B cell (primary cell): ENCODE measurements at regions of chr17 and their contacts with region 1.

Region 1: DNA sequence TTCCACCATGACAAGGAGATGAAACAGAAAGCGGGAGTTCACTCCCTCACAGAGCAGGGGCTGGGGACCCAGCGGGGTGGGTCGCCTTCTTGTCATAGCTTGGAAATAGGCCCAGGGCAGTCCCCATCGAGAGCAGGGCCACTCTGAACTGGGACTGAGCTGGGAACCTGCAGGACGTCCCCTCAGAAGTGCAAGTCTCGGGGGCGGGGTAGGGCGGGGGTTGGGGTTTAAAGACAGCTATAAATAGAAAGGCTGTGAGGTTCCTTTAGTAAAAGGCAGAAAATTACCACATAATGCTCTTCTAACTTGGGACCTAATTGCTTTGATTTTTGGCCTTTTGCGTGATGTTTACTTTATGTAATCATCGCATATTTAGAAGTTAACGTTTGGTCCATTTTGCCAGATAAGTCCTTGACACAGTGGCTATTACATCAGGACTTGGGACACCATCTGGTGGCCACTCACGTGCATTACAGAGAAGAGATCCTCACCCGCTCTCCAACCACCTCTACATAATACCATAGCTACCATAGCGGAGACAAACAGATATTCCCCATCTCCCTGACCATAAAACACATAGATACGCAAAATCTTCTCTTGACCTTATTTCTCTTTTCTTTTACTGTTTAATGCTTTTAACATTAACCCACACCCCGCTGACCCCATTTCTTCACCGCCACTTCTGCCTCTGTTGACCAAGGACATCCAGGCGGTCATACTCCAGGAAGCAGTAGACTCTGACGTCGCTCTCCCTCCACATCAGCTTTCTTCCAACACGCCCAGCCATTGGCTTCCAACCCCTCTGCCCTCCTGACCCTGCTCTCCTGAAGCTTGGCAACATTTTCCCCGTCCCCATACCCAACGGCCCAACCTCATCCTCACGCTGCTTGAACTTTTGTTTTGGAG is 27.5 kb upstream of the PIK3R6 start:
- DNase-seq: peak; percentile 71
- ATAC-seq: peak; percentile 51
- H3K4me3 ChIP-seq: no peak overlapping the region
- H3K4me3 Mint-ChIP-seq: no peak overlapping the region
- H3K27ac ChIP-seq: no peak overlapping the region
- H3K27ac Mint-ChIP-seq: no peak overlapping the region
- H3K4me1 ChIP-seq: peaks cover 23 to 38% of the 10 kb centered on the region in 2 donors
- H3K4me1 Mint-ChIP-seq: peaks cover 42% of the 10 kb centered on the region
- H3K27me3 ChIP-seq: no peaks in the 10 kb centered on the region
- H3K27me3 Mint-ChIP-seq: no peaks in the 10 kb centered on the region
- CTCF ChIP-seq: peak; percentile 80

Region 2: DNA sequence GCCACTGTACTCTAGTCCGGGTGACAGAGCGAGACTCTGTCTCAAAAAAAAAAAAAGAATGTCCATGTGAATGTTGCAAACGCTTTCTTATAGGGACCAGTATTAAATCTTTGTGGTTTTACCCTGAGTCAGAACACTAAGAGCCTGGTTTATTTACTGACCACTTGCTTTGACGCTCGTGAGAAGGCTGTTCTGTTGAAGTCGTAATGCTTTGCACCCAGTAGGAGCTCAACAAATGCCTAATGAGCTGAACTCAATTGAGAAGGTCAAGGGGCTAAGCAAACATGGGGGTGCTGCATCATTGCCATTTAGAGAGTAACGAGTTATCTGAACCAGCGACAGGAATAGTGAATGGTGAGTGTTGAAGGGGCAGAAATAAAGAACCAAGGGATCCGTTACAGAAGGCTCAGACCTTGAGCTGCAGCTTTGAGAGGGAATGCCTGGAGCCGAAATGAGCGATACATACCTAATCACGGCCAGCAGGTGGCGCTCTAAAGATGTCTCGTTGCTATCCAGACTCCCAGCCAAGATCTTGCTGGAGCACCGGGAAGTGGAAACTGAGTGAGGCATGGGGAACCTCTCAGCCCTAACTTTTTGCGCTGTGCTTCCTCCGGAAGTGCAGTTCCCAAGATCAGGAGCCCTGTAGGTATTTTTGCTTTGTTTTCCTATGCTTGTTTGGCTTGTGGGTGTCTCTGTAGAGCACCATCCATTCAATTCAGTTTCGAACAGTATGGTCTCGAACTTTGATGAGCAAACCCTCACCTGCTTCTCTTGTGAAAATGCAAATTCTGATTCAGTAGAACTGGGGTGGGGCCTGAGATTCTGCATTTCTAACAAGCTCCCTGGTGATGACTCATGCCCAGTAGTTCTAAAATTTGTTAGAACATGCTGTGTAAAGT is 484.7 kb before region 1 on chr17:
- CTCF ChIA-PET with region 1: interaction called, 12 read pairs
- POLR2A ChIA-PET with region 1: no interaction called
- intact Hi-C with region 1: loop called (anchors 1 kb)
- DNase-seq: peak; percentile 85
- ATAC-seq: peak; percentile 76
- H3K4me3 ChIP-seq: no peak overlapping the region
- H3K4me3 Mint-ChIP-seq: no peak overlapping the region
- H3K27ac ChIP-seq: no peak overlapping the region
- H3K27ac Mint-ChIP-seq: peak overlapping the region; percentile 50
- H3K4me1 ChIP-seq: peaks cover 0 to 5% of the 10 kb centered on the region in 2 donors
- H3K4me1 Mint-ChIP-seq: peaks cover 4% of the 10 kb centered on the region
- H3K27me3 ChIP-seq: peaks cover 0 to 19% (median 4%) of the 10 kb centered on the region in 4 experiments
- H3K27me3 Mint-ChIP-seq: peaks cover 21% of the 10 kb centered on the region
- CTCF ChIP-seq: peak; percentile 95

Region 3: GRCh38 chr17:8753976-8754440 is 140.9 kb before region 1 on chr17:
- CTCF ChIA-PET with region 1: interaction called, 20 read pairs
- POLR2A ChIA-PET with region 1: no interaction called
- intact Hi-C with region 1: loop called (anchors 1 kb)
- DNase-seq: peak; percentile 37
- ATAC-seq: no peak
- H3K4me3 ChIP-seq: no peak overlapping the region
- H3K4me3 Mint-ChIP-seq: no peak overlapping the region
- H3K27ac ChIP-seq: no peak overlapping the region
- H3K27ac Mint-ChIP-seq: no peak overlapping the region
- H3K4me1 ChIP-seq: no peaks in the 10 kb centered on the region
- H3K4me1 Mint-ChIP-seq: no peaks in the 10 kb centered on the region
- H3K27me3 ChIP-seq: peaks cover 0 to 7% (median 0%) of the 10 kb centered on the region in 4 experiments
- H3K27me3 Mint-ChIP-seq: peaks cover 39% of the 10 kb centered on the region
- CTCF ChIP-seq: peak; percentile 37

Region 4: DNA sequence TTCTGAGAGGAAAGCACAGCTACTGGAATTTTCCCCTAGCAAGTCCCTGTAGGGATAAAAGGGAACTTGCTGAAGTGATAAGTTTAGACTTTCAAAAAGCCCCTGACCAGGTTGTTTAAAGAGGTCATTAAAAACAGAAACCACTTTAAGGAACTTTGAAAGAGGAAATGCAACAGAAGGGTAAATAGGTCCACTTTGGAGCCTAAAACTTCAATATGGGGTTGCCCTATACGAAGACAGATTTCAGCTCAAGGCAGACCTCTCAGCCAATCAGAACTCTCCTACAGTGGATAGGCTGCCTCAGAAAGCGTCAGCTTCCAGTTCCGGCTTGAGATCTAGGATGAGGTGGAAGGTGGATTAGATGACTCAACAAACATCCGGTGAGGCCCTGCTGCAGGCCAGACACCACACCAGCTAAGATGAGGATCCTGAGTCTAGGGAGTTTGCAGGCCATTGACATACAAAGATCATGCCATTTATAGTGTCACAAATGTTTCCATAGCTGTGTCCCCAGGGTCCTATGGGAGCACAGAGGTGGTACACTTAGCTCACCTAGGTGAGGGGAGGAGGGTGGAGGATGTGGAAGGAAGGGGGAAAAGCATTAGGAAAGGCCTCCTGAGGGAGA is 87.9 kb before region 1 on chr17:
- CTCF ChIA-PET with region 1: interaction called, 34 read pairs
- POLR2A ChIA-PET with region 1: interaction called, 3 read pairs
- intact Hi-C with region 1: loop called (anchors 1 kb)
- DNase-seq: peak; percentile 88
- ATAC-seq: peak; percentile 89
- H3K4me3 ChIP-seq: peak overlapping the region in 2 of 5 experiments; percentile 10 to 26
- H3K4me3 Mint-ChIP-seq: peak overlapping the region; percentile 76
- H3K27ac ChIP-seq: peak overlapping the region; percentile 95 to 97
- H3K27ac Mint-ChIP-seq: peak overlapping the region; percentile 95
- H3K4me1 ChIP-seq: peaks cover 36 to 42% of the 10 kb centered on the region in 2 donors
- H3K4me1 Mint-ChIP-seq: peaks cover 44% of the 10 kb centered on the region
- H3K27me3 ChIP-seq: no peaks in the 10 kb centered on the region
- H3K27me3 Mint-ChIP-seq: peaks cover 4% of the 10 kb centered on the region
- CTCF ChIP-seq: no peak

Region 5: DNA sequence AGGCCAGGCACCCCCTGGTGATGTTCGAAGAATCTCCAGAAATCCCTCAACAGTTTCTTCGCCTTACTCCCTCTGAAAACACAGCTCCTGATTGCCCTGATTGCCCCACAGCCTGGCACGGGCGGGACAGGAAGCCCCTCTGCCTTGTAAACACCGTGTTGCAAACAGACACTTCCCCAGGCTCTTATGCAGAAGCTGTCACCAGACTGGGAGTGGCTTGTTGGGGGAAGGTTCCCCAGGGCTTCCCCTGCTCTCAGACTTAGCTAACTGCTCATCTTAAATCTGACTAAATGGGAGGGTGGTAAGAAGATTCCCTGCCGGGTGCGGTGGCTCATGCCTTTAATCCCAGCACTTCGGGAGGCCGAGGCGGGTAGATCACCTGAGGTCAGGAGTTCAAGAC is 59.4 kb after region 1 on chr17:
- CTCF ChIA-PET with region 1: interaction called, 14 read pairs
- POLR2A ChIA-PET with region 1: no interaction called
- intact Hi-C with region 1: no loop called
- DNase-seq: peak; percentile 88
- ATAC-seq: peak; percentile 99
- H3K4me3 ChIP-seq: peak overlapping the region in 3 of 5 experiments; percentile 8 to 31 (median 22)
- H3K4me3 Mint-ChIP-seq: peak overlapping the region; percentile 87
- H3K27ac ChIP-seq: peak overlapping the region; percentile 76 to 84
- H3K27ac Mint-ChIP-seq: peak overlapping the region; percentile 97
- H3K4me1 ChIP-seq: peaks cover 53 to 74% of the 10 kb centered on the region in 2 donors
- H3K4me1 Mint-ChIP-seq: peaks cover 85% of the 10 kb centered on the region
- H3K27me3 ChIP-seq: no peaks in the 10 kb centered on the region
- H3K27me3 Mint-ChIP-seq: no peaks in the 10 kb centered on the region
- CTCF ChIP-seq: no peak